Common myeloid progenitor, CD34-positive (primary cell): ENCODE measurements at regions of chrX and their contacts with region 1.

Region 1: GRCh38 chrX:104113222-104113965 is 1.1 kb downstream of the ZCCHC18 start:
- DNase-seq: peak; percentile 58 to 73 (median 71)
- H3K4me3 ChIP-seq: peak overlapping the region in 6 of 7 experiments; percentile 7 to 80 (median 60)
- H3K27ac ChIP-seq: no peak overlapping the region
- H3K4me1 ChIP-seq: peaks cover 0 to 19% (median 4%) of the 10 kb centered on the region in 4 experiments
- H3K27me3 ChIP-seq: peaks cover 0 to 34% (median 0%) of the 10 kb centered on the region in 5 experiments

Region 2: DNA sequence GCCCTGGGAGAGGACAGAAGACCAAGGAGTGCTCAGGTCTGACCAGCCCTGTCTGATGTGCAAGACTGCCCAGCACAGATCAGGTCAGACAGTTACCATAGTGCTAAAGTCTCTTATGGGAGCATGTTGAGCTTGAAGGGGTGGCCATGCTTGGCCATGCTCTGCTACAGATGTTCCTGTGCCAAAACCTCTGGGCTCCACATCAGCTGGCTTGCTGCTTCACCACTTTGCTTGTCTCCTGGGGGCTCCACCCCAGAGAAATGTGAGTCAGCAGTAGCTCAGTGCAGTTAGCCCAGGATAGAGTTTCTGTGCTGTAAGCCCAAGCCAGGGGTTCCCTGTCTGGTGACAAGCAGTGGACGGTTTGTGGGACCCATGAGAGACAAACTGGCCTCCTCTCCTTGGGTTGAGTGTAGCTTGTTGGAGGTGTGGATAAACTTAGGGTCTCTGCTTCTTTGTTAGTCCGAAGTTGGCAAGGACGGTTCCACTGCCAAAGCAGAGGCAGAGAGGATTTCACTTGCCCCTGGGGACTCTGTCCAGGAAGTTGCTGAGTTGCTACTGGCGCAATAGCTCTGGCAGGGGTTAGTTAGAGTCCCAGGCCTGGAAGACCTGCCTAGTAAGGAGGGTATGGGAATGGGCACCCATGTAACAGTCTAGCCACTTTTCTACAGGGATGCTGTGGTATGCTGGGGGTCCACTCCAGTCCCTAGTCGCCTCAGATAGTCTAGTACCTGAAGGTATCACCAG is 28.7 kb before region 1 on chrX:
- CTCF ChIA-PET with region 1: no interaction called
- POLR2A ChIA-PET with region 1: no interaction called
- DNase-seq: no peak
- H3K4me3 ChIP-seq: no peak overlapping the region
- H3K27ac ChIP-seq: no peak overlapping the region
- H3K4me1 ChIP-seq: no peaks in the 10 kb centered on the region
- H3K27me3 ChIP-seq: peaks cover 0 to 8% (median 2%) of the 10 kb centered on the region in 5 experiments

Region 3: GRCh38 chrX:104098151-104098808 is 15.1 kb before region 1 on chrX:
- CTCF ChIA-PET with region 1: interaction called, 18 read pairs
- POLR2A ChIA-PET with region 1: no interaction called
- DNase-seq: peak; percentile 81 to 90 (median 88)
- H3K4me3 ChIP-seq: peak overlapping the region in 1 of 7 experiments; percentile 23
- H3K27ac ChIP-seq: no peak overlapping the region
- H3K4me1 ChIP-seq: no peaks in the 10 kb centered on the region
- H3K27me3 ChIP-seq: peaks cover 0 to 3% (median 0%) of the 10 kb centered on the region in 5 experiments